Body of pancreas (tissue), 4 donors: ENCODE measurements at regions of chr2 and their contacts with region 1.

Region 1: GRCh38 chr2:168346725-168347477 is 99.5 kb upstream of the STK39 start:
- DNase-seq: peak; percentile 69 to 77 (median 74)
- ATAC-seq: peak; percentile 85
- H3K4me3 ChIP-seq: no peak overlapping the region
- H3K27ac ChIP-seq: peak overlapping the region in 2 of 4 donors; percentile 39 to 61
- H3K4me1 ChIP-seq: peaks cover 20% of the 10 kb centered on the region
- H3K27me3 ChIP-seq: no peaks in the 10 kb centered on the region
- CTCF ChIP-seq: peak; percentile 78 to 93 (median 89)
- POLR2A ChIP-seq: no peak

Region 2: DNA sequence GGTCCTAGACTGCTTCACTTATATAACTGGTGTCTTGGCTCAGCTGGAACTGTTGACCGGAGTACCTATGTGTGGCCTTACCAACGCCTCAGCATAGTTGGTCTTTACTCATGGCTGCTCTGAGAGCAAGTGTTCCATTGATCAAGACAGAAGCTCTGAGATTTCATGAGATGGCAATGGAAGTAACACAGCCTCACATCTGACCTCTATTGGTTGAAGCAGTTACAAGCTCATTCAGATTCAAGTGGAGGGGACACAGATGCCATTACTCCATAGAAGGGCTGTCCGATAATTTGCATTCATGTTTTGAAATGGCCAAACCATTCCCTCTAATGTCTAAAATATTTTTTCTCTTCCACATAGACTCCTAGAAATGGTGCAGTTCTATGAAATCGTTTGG is 53.1 kb before region 1 on chr2:
- intact Hi-C with region 1: no loop called
- DNase-seq: no peak
- ATAC-seq: no peak
- H3K4me3 ChIP-seq: no peak overlapping the region
- H3K27ac ChIP-seq: no peak overlapping the region
- H3K4me1 ChIP-seq: no peaks in the 10 kb centered on the region
- H3K27me3 ChIP-seq: no peaks in the 10 kb centered on the region
- CTCF ChIP-seq: peak in 4 of 7 experiments; percentile 19 to 33 (median 22)
- POLR2A ChIP-seq: no peak

Region 3: DNA sequence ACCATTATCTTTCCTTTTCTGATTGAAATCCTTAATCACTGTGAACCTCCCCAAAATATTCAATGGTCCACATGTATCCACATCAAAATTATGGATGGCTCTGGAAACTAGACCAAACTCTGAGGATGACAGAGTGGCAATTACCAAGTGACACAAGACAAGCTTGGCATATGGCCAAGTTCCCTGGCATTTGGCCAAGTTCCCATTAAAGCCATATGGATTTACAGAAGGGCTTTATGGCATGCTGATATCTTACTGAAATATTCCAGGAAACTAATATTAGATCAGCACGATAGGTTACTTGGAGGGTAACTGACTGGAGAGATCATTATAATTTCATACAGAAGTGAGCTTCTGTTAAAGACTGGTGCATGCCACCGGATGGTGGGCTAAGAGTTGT is 87.2 kb after region 1 on chr2:
- intact Hi-C with region 1: no loop called
- DNase-seq: peak; percentile 16 to 55 (median 48)
- ATAC-seq: no peak
- H3K4me3 ChIP-seq: no peak overlapping the region
- H3K27ac ChIP-seq: no peak overlapping the region
- H3K4me1 ChIP-seq: no peaks in the 10 kb centered on the region
- H3K27me3 ChIP-seq: no peaks in the 10 kb centered on the region
- CTCF ChIP-seq: no peak
- POLR2A ChIP-seq: no peak

Region 4: DNA sequence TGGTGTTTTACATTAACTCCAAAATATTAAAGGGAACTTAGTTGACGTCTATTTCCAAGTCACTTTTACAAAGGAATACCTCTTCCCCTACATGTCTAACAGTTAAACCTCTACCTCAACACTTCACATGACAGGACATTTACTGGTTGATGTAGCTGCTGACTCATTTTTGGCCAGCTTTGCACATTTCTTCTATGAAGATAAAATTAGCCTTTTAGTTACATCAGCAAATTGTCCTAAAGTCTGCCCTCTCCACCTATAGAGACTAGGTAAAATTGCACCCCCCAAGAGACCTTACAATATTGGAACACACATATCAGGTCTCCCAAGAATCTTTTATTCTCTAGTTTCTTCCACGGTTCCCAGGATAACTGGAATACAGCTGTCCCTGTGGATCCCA is 99.1 kb after region 1 on chr2:
- intact Hi-C with region 1: no loop called
- DNase-seq: no peak
- ATAC-seq: no peak
- H3K4me3 ChIP-seq: no peak overlapping the region
- H3K27ac ChIP-seq: no peak overlapping the region
- H3K4me1 ChIP-seq: no peaks in the 10 kb centered on the region
- H3K27me3 ChIP-seq: no peaks in the 10 kb centered on the region
- CTCF ChIP-seq: no peak
- POLR2A ChIP-seq: no peak

Region 5: GRCh38 chr2:168758970-168759820 is 412.3 kb after region 1 on chr2:
- intact Hi-C with region 1: loop called (anchors 10 kb)
- DNase-seq: peak; percentile 29 to 46 (median 44)
- ATAC-seq: peak; percentile 81
- H3K4me3 ChIP-seq: no peak overlapping the region
- H3K27ac ChIP-seq: no peak overlapping the region
- H3K4me1 ChIP-seq: no peaks in the 10 kb centered on the region
- H3K27me3 ChIP-seq: no peaks in the 10 kb centered on the region
- CTCF ChIP-seq: peak; percentile 45 to 82 (median 67)
- POLR2A ChIP-seq: no peak

Region 6: GRCh38 chr2:168920504-168921157 is 573.7 kb after region 1 on chr2:
- intact Hi-C with region 1: loop called (anchors 10 kb)
- DNase-seq: no peak
- ATAC-seq: peak; percentile 35
- H3K4me3 ChIP-seq: no peak overlapping the region
- H3K27ac ChIP-seq: no peak overlapping the region
- H3K4me1 ChIP-seq: no peaks in the 10 kb centered on the region
- H3K27me3 ChIP-seq: no peaks in the 10 kb centered on the region
- CTCF ChIP-seq: peak; percentile 28 to 69 (median 65)
- POLR2A ChIP-seq: no peak